Activated CD4-positive, alpha-beta T cell treated with anti-CD3 and anti-CD28 coated beads for 36 hours (primary cell): ENCODE measurements at regions of chr19 and their contacts with region 1.

Region 1: DNA sequence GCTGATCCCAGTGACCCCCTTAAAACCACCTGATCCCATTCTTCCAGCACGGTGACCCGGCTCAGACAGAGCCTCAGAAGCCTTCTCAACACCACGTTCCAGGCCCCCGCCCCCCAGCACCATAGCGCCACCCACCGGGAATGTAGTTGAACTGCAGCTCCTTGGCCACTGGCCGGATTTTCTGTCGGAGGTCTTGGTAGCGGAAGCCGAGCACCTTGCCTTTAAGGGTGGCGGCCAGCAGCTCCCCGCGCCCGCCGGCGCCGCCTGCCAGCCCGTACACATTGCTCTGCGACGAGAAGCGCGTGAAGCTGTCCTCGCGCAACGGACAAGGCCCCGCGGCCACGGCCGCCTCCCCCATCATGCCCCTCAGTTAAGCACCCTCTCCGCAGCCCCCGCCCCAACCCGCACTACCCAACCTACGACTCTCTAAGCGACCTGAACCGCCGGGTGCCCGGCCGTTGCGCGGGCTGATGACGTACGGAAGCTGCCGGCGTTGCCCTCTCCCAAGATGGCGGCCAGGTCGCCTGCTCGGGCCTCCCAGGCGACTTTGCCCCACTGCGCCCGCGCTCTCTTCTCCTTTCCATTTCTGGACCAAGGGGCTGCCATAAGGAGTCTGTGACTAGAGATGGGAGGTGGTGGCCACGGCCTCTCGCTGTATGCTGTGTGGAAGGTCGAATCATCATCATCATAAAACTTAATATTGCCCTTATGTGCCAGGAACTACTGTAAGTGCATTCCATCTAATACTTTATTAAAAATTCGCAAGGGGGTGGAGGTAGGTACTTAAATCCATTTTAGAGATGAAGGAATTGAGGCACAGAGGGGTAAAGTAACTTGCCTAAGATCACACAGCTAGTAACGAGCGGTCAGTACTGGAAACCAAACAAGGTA is at the start of gene KPTN:
- DNase-seq: peak; percentile 95
- ATAC-seq: peak; percentile 90
- H3K4me3 Mint-ChIP-seq: peak within 1 kb of the TSS; percentile 92
- H3K27ac Mint-ChIP-seq: peak within 1 kb of the TSS; percentile 98
- H3K4me1 Mint-ChIP-seq: peaks cover 27% of the 10 kb centered on the region
- H3K27me3 Mint-ChIP-seq: no peaks in the 10 kb centered on the region
- total RNA-seq, gene KPTN: 9.7 to 10.5 TPM

Region 2: GRCh38 chr19:47047763-47048405 is 436.2 kb before region 1 on chr19:
- CTCF ChIA-PET with region 1: no interaction called
- POLR2A ChIA-PET with region 1: no interaction called
- intact Hi-C with region 1: loop called in 1 of 2 experiments (anchors 1 kb)
- DNase-seq: peak; percentile 92
- ATAC-seq: peak; percentile 73
- H3K4me3 Mint-ChIP-seq: peak overlapping the region; percentile 90
- H3K27ac Mint-ChIP-seq: peak overlapping the region; percentile 86
- H3K4me1 Mint-ChIP-seq: peaks cover 8% of the 10 kb centered on the region
- H3K27me3 Mint-ChIP-seq: no peaks in the 10 kb centered on the region

Region 3: DNA sequence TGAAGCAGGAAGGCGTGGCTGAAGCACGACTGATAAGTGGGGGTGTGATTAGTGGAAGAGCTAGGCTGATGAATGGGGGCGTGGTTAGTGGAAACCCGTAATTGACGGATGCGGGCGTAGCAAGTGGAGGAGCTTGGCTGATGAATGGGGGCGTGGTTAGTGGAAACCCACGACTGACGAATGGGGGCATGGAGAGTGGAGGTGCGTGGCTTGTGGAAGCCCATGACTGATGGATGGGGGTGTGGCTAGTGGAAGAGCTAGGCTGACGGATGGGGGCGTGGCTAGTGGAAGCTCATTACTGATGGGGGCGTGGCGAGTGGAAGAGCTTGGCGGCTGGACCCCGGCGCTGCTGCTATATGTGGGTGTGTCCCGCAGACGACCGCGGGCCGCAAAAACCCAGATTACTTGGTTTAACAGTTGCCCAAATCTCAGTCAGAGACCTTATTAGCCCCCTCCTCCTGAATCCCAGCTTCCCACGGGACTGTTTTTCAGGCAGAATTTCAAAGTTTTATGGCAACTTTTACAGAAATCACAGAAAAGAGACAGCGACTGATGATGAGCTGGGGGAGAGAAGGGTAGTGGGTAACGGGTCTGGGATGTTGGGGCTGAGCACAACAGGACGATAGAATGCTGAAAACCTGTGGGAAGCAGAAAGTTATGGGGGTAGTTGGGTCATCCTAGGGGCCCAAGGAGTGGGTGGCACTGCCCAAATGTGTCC is 55.7 kb before region 1 on chr19:
- CTCF ChIA-PET with region 1: interaction called, 13 read pairs
- POLR2A ChIA-PET with region 1: no interaction called
- intact Hi-C with region 1: loop called (anchors 2 kb)
- DNase-seq: peak; percentile 94
- ATAC-seq: peak; percentile 75
- H3K4me3 Mint-ChIP-seq: no peak overlapping the region
- H3K27ac Mint-ChIP-seq: no peak overlapping the region
- H3K4me1 Mint-ChIP-seq: peaks cover 13% of the 10 kb centered on the region
- H3K27me3 Mint-ChIP-seq: peaks cover 39% of the 10 kb centered on the region

Region 4: DNA sequence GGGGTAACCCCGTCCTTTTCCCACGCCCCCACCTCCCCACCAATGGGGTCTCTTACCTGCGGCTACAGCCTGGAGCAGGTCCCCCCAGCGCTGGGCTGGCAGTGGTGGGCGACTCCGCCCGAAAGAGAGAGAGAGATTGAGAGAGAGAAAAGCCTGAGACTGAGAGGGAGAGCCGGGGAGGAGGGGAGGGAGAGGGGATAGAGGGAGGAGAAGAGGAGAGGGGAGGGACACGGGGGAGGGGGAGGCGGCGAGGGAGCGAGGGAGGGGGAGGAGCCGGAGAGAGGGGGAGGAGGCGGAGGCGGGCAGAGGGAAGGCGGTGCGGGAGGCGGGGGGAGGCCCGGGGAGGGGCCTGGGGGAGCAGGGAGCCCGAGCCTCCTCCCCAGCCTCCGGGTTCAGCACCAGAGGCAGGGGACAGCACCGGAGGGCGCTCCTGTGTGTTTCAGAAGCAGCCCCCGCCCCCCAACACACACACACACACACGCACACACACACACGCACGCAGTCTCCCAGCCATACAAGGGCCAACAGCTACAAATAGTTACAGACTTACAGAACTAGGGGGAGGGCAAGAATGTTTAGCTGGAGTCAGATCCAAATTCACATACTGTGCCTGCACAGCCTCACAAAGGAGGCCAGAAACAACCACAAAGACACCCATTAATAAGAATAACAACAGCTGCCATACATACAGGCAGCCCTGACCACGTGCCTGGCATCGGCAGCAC is 12.2 kb before region 1 on chr19 and contains the start of gene SLC8A2:
- CTCF ChIA-PET with region 1: interaction called, 4 read pairs
- POLR2A ChIA-PET with region 1: no interaction called
- intact Hi-C with region 1: loop called in 1 of 2 experiments (anchors 1 kb)
- DNase-seq: peak; percentile 82
- ATAC-seq: peak; percentile 80
- H3K4me3 Mint-ChIP-seq: no peak within 1 kb of the TSS
- H3K27ac Mint-ChIP-seq: no peak within 1 kb of the TSS
- H3K4me1 Mint-ChIP-seq: peaks cover 14% of the 10 kb centered on the region
- H3K27me3 Mint-ChIP-seq: peaks cover 46% of the 10 kb centered on the region
- total RNA-seq, gene SLC8A2: 0.11 to 0.23 TPM

Region 5: GRCh38 chr19:47600246-47601179 is 116.5 kb after region 1 on chr19:
- CTCF ChIA-PET with region 1: no interaction called
- POLR2A ChIA-PET with region 1: interaction called, 4 read pairs
- intact Hi-C with region 1: loop called in 1 of 2 experiments (anchors 1 kb)
- DNase-seq: peak; percentile 100
- ATAC-seq: peak; percentile 98
- H3K4me3 Mint-ChIP-seq: peak overlapping the region; percentile 79
- H3K27ac Mint-ChIP-seq: peak overlapping the region; percentile 89
- H3K4me1 Mint-ChIP-seq: peaks cover 31% of the 10 kb centered on the region
- H3K27me3 Mint-ChIP-seq: no peaks in the 10 kb centered on the region

Region 6: GRCh38 chr19:47745010-47745901 is 261.2 kb after region 1 on chr19 and contains the start of gene NOP53:
- CTCF ChIA-PET with region 1: no interaction called
- POLR2A ChIA-PET with region 1: no interaction called
- intact Hi-C with region 1: loop called in 1 of 2 experiments (anchors 1 kb)
- DNase-seq: peak; percentile 98
- ATAC-seq: peak; percentile 71
- H3K4me3 Mint-ChIP-seq: peak within 1 kb of the TSS; percentile 98
- H3K27ac Mint-ChIP-seq: peak within 1 kb of the TSS; percentile 99
- H3K4me1 Mint-ChIP-seq: peaks cover 44% of the 10 kb centered on the region
- H3K27me3 Mint-ChIP-seq: no peaks in the 10 kb centered on the region
- total RNA-seq, gene NOP53: 317 to 374 TPM